Dorsolateral prefrontal cortex (tissue), 120 donors: ENCODE measurements at regions of chr2 and their contacts with region 1.

Region 1: GRCh38 chr2:21175895-21176646 is 52.3 kb downstream of the TDRD15 start:
- DNase-seq: no peak
- H3K4me3 ChIP-seq: peak overlapping the region in 1 of 59 donors; percentile 2
- H3K27ac ChIP-seq: peak overlapping the region in 53 of 59 donors; percentile 1 to 86 (median 62)
- H3K27me3 ChIP-seq: no peaks in the 10 kb centered on the region
- CTCF ChIP-seq: peak; percentile 52 to 90 (median 74)

Region 2: DNA sequence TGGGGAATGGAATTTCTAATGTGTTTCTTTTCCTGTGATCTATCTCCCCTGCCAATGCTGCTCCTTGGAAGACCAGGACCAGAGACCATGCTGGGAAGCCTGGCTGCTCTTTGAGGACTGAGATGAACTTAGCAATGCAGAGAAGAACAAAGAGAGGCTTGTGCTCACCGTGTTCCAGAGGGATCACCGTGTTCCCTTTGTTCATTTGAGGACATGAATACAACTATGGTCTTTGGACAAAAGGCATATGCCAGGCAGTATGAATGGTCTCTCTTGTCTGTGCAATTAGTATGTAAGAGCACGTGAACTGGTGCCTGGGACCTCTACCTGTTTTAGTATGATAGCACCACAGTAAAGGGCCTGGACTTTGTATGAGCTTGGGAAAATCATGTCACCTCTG is 87.6 kb after region 1 on chr2:
- intact Hi-C with region 1: loop called in 1 of 2 experiments (anchors 2 kb)
- DNase-seq: peak in 8 of 10 donors; percentile 52 to 89 (median 76)
- H3K4me3 ChIP-seq: peak overlapping the region in 1 of 59 donors; percentile 13
- H3K27ac ChIP-seq: peak overlapping the region; percentile 45 to 100 (median 98)
- H3K27me3 ChIP-seq: no peaks in the 10 kb centered on the region
- CTCF ChIP-seq: peak in 5 of 56 donors; percentile 7 to 25 (median 10)

Region 3: GRCh38 chr2:21890041-21890440 is 714.0 kb after region 1 on chr2:
- intact Hi-C with region 1: loop called in 1 of 2 experiments (anchors 5 kb)
- DNase-seq: peak in 8 of 10 donors; percentile 27 to 74 (median 48)
- H3K4me3 ChIP-seq: no peak overlapping the region
- H3K27ac ChIP-seq: peak overlapping the region in 38 of 59 donors; percentile 13 to 87 (median 50)
- H3K27me3 ChIP-seq: no peaks in the 10 kb centered on the region
- CTCF ChIP-seq: peak in 31 of 56 donors; percentile 7 to 71 (median 35)